ENCODE measurements at regions of chr6 and their contacts with region 1.

Region 1: GRCh38 chr6:164106345-164106769 is 691.8 kb downstream of the QKI start:
- DNase-seq: peak; percentile 16
- ATAC-seq: peak; percentile 83
- H3K4me3 ChIP-seq: peak overlapping the region in 1 of 3 experiments; percentile 17; a peak in 1 of 6 replicates
- H3K27ac ChIP-seq: no peak overlapping the region
- H3K4me1 ChIP-seq: peaks cover 6% of the 10 kb centered on the region; the same call in 1 of the 2 replicates
- H3K27me3 ChIP-seq: peaks cover 0 to 30% of the 10 kb centered on the region in 2 experiments; a peak in 3 of 5 replicates
- CTCF ChIP-seq: peak; percentile 76
- EP300 ChIP-seq: no peak
- POLR2A ChIP-seq: no peak
- RAD21 ChIP-seq: peak; percentile 43; the same call in 1 of the 2 replicates

Region 2: DNA sequence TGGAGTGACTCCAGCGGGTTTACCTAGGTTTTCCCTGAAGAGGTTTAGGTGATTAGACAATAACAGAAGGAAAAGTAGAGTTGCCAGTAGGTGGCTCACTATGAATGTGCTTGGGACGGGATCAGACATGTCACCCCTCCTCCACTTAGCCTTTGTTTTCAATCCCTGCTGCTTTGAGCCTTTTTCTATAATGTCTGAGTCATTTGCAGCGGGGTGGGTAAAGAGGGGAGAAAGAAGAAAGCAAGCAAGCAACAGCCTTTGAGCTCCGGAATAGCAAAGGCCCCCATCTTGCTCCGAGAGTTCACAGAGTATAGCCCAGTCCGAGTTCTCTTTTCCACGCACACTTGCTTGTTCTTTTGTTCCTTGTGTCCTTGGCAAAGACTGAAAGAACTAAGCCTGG is 1249.5 kb before region 1 on chr6:
- CTCF ChIA-PET with region 1: no interaction called
- POLR2A ChIA-PET with region 1: no interaction called
- in situ Hi-C with region 1: no loop called
- intact Hi-C with region 1: loop called (anchors 5 kb)
- DNase-seq: peak; percentile 64
- ATAC-seq: peak; percentile 98
- H3K4me3 ChIP-seq: no peak overlapping the region
- H3K27ac ChIP-seq: no peak overlapping the region
- H3K4me1 ChIP-seq: no peaks in the 10 kb centered on the region
- H3K27me3 ChIP-seq: no peaks in the 10 kb centered on the region
- CTCF ChIP-seq: peak; percentile 73
- EP300 ChIP-seq: no peak
- POLR2A ChIP-seq: no peak
- RAD21 ChIP-seq: peak; percentile 56

Region 3: DNA sequence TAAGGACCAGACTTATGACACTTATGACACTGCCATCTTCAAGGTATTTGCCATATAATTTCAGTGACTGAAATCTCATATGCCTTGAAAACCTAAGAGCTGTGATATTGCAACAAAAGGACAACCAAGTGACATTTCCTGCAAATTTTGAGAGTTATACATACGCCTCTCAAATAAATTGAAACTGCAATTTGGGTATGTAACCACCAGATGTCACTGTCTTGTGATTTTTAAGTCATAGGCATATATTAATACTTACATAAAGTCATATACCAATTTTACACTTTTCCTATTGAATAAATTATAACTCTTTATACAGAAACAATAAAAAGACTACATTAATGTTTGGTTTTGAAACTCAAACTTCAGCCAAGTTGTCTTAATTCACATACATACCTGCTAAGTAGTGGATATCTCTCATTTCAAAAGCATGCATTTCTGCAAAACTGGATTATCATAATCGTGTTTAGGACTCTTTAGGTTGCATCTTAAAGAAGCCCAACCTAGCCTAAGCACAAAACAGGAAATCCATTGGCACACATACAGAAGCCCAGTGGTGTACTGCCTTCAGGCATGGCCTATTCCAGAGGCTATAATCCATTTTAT is 1198.4 kb before region 1 on chr6:
- CTCF ChIA-PET with region 1: no interaction called
- POLR2A ChIA-PET with region 1: no interaction called
- in situ Hi-C with region 1: no loop called
- intact Hi-C with region 1: loop called (anchors 5 kb)
- DNase-seq: peak; percentile 7
- ATAC-seq: no peak
- H3K4me3 ChIP-seq: no peak overlapping the region
- H3K27ac ChIP-seq: no peak overlapping the region
- H3K4me1 ChIP-seq: no peaks in the 10 kb centered on the region
- H3K27me3 ChIP-seq: no peaks in the 10 kb centered on the region
- CTCF ChIP-seq: peak; percentile 54
- EP300 ChIP-seq: no peak
- POLR2A ChIP-seq: no peak
- RAD21 ChIP-seq: no peak

Region 4: GRCh38 chr6:163651915-163652668 is 454.3 kb before region 1 on chr6:
- CTCF ChIA-PET with region 1: no interaction called
- POLR2A ChIA-PET with region 1: no interaction called
- in situ Hi-C with region 1: no loop called
- intact Hi-C with region 1: no loop called
- DNase-seq: no peak
- ATAC-seq: peak; percentile 65
- H3K4me3 ChIP-seq: no peak overlapping the region
- H3K27ac ChIP-seq: no peak overlapping the region
- H3K4me1 ChIP-seq: peaks cover 8% of the 10 kb centered on the region; the same call in 1 of the 2 replicates
- H3K27me3 ChIP-seq: no peaks in the 10 kb centered on the region; a peak in 2 of 5 replicates
- CTCF ChIP-seq: no peak
- EP300 ChIP-seq: no peak
- POLR2A ChIP-seq: no peak
- RAD21 ChIP-seq: no peak

Region 5: GRCh38 chr6:164130151-164130550 is 23.8 kb after region 1 on chr6:
- CTCF ChIA-PET with region 1: no interaction called
- POLR2A ChIA-PET with region 1: no interaction called
- in situ Hi-C with region 1: no loop called
- intact Hi-C with region 1: no loop called
- DNase-seq: no peak
- ATAC-seq: no peak
- H3K4me3 ChIP-seq: no peak overlapping the region
- H3K27ac ChIP-seq: no peak overlapping the region
- H3K4me1 ChIP-seq: no peaks in the 10 kb centered on the region
- H3K27me3 ChIP-seq: no peaks in the 10 kb centered on the region
- CTCF ChIP-seq: no peak
- EP300 ChIP-seq: no peak
- POLR2A ChIP-seq: no peak
- RAD21 ChIP-seq: no peak

Region 6: DNA sequence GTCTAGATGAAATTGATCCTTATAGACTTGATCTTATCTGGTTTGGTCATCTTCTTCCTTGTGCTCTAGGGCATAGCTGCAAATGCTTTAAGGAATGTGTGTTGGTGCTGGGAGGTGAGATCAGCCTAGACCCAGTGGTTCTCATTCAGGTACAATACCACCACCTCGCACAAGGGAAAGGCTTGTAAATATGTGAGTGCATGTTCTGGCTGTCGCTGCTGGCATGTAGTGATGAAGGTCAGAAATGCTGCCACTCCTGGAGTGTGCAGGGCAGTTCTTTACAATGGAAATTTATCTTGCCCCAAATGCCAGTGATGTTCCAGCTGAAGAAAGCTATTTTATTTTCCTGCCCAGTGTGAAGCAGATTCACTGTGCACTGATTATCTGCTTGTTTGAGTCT is 209.0 kb after region 1 on chr6:
- CTCF ChIA-PET with region 1: no interaction called
- POLR2A ChIA-PET with region 1: no interaction called
- in situ Hi-C with region 1: no loop called
- intact Hi-C with region 1: no loop called
- DNase-seq: no peak
- ATAC-seq: no peak
- H3K4me3 ChIP-seq: no peak overlapping the region
- H3K27ac ChIP-seq: no peak overlapping the region
- H3K4me1 ChIP-seq: no peaks in the 10 kb centered on the region
- H3K27me3 ChIP-seq: no peaks in the 10 kb centered on the region
- CTCF ChIP-seq: no peak
- EP300 ChIP-seq: no peak
- POLR2A ChIP-seq: no peak
- RAD21 ChIP-seq: no peak